Activated T-helper 1 cell treated with anti-CD3 and anti-CD28 coated beads, Interleukin-12 subunit alpha, Interleukin-12 subunit beta, Interleukin-2, Interleukin-4 antibody, amounts not matched to agents 30 ng/mL and 10 ng/mL and 1 ng/mL, durations not matched to agents 14 hours and 24 hours and 36 hours (primary cell): ENCODE measurements at regions of chr2 and their contacts with region 1.

Region 1: GRCh38 chr2:64523666-64524603 is at the start of gene AFTPH:
- DNase-seq: peak; percentile 100
- H3K4me3 Mint-ChIP-seq: peak within 1 kb of the TSS; percentile 99
- H3K27ac Mint-ChIP-seq: peak within 1 kb of the TSS; percentile 100
- H3K4me1 Mint-ChIP-seq: peaks cover 39% of the 10 kb centered on the region
- H3K27me3 Mint-ChIP-seq: peaks cover 2% of the 10 kb centered on the region
- total RNA-seq, gene AFTPH: 42.4 and 43.4 TPM in 2 replicates

Region 2: GRCh38 chr2:64133828-64134227 is 390.1 kb before region 1 on chr2:
- intact Hi-C with region 1: loop called (anchors 2 kb)
- DNase-seq: no peak
- H3K4me3 Mint-ChIP-seq: peak overlapping the region; percentile 39
- H3K27ac Mint-ChIP-seq: peak overlapping the region; percentile 88
- H3K4me1 Mint-ChIP-seq: peaks cover 90% of the 10 kb centered on the region
- H3K27me3 Mint-ChIP-seq: no peaks in the 10 kb centered on the region

Region 3: DNA sequence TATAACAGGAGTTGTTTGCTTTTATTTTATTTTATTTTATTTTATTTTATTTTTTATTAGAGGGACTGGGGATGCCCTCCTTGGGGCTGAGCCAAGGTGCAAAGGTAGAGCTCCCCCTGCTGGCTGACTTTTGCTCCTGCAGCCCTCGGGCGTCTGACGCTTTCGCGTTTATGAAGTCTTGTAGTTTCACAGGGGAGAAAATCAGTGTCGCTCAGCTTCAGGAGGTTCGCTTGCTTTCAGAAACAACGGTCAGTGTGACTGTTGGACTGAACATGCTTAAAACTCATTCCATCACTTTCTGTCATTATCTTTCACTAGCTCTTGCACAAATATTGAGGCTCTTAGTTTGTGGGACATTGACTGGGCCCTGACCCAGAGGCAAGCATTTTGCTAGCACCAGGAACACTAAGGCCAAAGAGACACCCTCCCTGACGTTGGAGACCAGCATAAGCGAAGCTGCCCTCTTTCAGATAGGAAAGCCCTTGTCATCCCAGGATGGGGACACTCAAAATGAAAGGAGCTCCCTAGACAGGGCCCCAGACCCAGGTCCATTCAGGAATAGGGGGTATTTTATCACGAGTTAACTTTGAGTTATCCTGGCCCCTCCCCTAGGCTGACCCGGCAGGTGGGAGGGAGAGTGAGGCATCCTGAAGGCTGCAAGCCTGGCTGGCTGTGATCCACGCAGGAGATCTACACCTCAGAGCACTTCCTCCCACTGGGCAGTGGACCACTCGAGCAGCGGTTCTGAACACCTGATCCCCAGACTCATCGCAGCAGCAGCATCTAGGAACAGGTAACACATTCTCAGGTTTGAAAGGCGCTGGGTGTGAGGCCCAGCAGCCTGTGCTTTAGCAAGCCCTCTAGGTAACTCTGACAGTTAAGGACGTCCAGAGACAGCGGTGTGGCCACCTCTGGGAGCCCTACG is 35.6 kb before region 1 on chr2:
- intact Hi-C with region 1: no loop called
- DNase-seq: peak; percentile 53
- H3K4me3 Mint-ChIP-seq: no peak overlapping the region
- H3K27ac Mint-ChIP-seq: no peak overlapping the region
- H3K4me1 Mint-ChIP-seq: peaks cover 8% of the 10 kb centered on the region
- H3K27me3 Mint-ChIP-seq: peaks cover 24% of the 10 kb centered on the region

Region 4: DNA sequence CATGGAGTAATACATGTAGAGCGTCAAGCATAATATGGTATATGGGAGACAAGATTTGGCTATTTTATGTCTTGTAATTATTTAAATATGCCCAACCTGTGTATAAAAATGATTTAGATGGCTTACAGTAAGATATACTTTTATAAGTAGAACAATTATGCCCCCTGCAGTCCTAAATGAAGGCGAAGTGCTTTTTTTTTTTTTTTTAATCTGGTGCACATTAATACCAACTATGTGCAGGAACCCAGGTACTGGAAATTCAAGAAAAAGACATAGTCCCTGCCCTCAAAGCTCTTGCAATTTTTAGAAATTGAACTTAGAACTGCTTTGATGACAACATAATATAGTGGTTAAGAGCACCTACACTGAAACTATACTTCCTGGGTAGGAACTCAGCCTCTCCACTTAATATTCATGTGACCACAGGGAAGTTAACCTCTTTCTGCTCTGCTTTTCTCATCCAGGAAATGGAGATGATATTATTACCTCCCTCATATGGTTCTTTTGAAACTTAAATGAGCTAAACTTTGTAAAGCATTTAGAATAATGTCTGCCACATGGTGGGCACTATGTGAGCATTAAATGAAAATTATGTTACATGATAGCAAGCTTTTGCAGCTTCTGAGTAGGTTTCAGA is 38.3 kb after region 1 on chr2:
- intact Hi-C with region 1: loop called (anchors 1 kb)
- DNase-seq: no peak
- H3K4me3 Mint-ChIP-seq: no peak overlapping the region
- H3K27ac Mint-ChIP-seq: no peak overlapping the region
- H3K4me1 Mint-ChIP-seq: peaks cover 36% of the 10 kb centered on the region
- H3K27me3 Mint-ChIP-seq: no peaks in the 10 kb centered on the region

Region 5: GRCh38 chr2:64750817-64751285 is 226.9 kb after region 1 on chr2:
- intact Hi-C with region 1: loop called (anchors 1 kb)
- DNase-seq: peak; percentile 97
- H3K4me3 Mint-ChIP-seq: peak overlapping the region; percentile 91
- H3K27ac Mint-ChIP-seq: peak overlapping the region; percentile 98
- H3K4me1 Mint-ChIP-seq: peaks cover 34% of the 10 kb centered on the region
- H3K27me3 Mint-ChIP-seq: no peaks in the 10 kb centered on the region

Region 6: DNA sequence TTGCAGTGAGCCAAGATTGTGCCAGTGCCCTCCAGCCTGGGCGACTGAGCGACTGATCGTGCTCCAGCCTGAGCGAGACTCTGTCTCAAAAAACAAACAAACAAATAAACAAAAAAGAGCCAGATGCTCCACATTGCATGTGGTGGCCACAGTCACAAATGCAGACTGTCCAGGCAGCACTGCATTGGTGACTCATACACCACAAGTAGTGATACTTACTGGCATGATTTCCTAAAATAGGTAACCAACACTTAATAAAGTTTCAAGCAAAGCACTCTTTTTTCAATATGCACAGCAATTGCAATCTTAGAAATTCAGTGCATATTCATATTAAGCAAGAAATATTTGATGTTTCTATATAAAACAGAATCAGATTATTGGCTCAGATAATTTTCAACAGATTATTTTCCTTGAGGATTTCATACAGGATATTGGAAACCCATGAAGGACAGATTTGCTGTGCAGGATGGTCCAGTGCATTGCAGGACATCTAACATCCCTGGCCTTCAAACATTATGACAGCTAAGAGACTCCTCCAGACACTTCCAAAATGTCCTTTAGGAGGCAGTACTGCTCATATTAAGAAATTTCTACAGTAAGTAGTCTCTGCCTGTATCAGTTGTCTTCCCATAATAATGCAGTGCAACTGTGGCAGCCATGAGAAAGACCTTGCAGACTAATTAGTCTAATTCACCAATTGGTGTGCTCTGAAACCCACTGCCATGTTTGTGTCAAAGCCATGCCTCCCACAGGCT is 454.8 kb after region 1 on chr2:
- intact Hi-C with region 1: loop called (anchors 1 kb)
- DNase-seq: no peak
- H3K4me3 Mint-ChIP-seq: no peak overlapping the region
- H3K27ac Mint-ChIP-seq: no peak overlapping the region
- H3K4me1 Mint-ChIP-seq: peaks cover 35% of the 10 kb centered on the region
- H3K27me3 Mint-ChIP-seq: peaks cover 2% of the 10 kb centered on the region

Region 7: DNA sequence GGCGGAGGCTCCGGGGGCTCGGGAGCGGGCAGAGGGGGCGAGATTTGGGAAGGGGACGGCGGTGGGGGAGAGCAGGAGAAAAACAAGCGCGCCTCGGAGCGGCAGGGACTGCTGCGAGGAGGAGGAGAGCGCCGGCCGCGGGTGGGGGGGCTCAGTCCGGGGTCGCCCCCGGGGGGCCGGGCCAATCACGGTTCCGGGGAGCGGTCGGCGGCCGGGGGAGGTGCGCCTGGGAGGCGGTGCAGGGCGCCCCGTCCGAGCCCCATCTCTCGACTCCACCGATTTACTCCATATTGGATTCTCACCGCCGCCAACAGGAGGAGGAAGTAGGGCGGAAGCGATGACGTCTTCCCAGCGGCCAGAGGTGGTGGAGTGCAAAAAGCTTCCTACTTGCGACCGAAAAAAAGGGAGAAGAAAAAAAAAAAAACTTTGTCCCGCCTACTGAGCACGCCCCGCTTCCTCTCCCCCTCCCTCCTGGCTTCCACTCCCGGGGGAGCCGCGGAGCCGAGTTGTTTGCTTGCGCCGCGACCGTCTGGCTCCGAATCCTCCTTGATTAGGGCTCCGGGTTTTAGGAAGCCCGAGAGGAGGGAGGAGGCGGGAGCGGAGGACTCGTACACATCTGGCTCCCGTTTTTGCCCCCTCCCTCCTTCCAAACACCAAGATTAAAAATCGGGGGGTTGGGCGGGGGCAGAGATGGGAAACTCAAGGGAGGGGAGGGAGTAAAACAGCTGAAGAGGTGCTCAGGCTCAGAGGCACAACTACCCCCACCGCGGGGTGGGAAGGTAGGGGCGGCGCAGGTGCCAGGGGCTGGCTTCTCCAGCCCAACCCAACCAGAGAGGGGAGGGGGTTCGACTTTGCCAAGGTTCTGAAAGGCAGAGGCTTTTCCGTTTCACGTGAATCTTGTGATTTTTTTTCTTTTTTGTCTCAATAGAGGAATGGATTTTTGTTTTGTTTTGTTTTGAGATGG is 908.6 kb after region 1 on chr2 and contains the start of gene SPRED2:
- intact Hi-C with region 1: loop called (anchors 5 kb)
- DNase-seq: peak; percentile 71
- H3K4me3 Mint-ChIP-seq: peak within 1 kb of the TSS; percentile 95
- H3K27ac Mint-ChIP-seq: peak within 1 kb of the TSS; percentile 92
- H3K4me1 Mint-ChIP-seq: peaks cover 24% of the 10 kb centered on the region
- H3K27me3 Mint-ChIP-seq: peaks cover 37% of the 10 kb centered on the region
- total RNA-seq, gene SPRED2: 8.5 and 9.4 TPM in 2 replicates